MCF 10A (cell line): ENCODE measurements at regions of chr1 and their contacts with region 1.

Region 1: GRCh38 chr1:11907275-11908094 is 18.7 kb downstream of the KIAA2013 start:
- DNase-seq: peak; percentile 94
- H3K4me3 Mint-ChIP-seq: peak overlapping the region; percentile 89
- H3K27ac Mint-ChIP-seq: peak overlapping the region; percentile 100
- H3K4me1 Mint-ChIP-seq: peaks cover 5% of the 10 kb centered on the region
- H3K27me3 Mint-ChIP-seq: no peaks in the 10 kb centered on the region
- CTCF ChIP-seq: peak; percentile 65

Region 2: GRCh38 chr1:11735854-11736745 is 171.4 kb before region 1 on chr1 and contains the start of gene AGTRAP:
- CTCF ChIA-PET with region 1: no interaction called
- POLR2A ChIA-PET with region 1: interaction called, 25 read pairs
- intact Hi-C with region 1: no loop called
- DNase-seq: peak; percentile 89
- H3K4me3 Mint-ChIP-seq: peak within 1 kb of the TSS; percentile 97
- H3K27ac Mint-ChIP-seq: peak within 1 kb of the TSS; percentile 98
- H3K4me1 Mint-ChIP-seq: peaks cover 7% of the 10 kb centered on the region
- H3K27me3 Mint-ChIP-seq: no peaks in the 10 kb centered on the region
- CTCF ChIP-seq: no peak
- total RNA-seq, gene AGTRAP: 68.4 and 73.1 TPM in 2 replicates

Region 3: DNA sequence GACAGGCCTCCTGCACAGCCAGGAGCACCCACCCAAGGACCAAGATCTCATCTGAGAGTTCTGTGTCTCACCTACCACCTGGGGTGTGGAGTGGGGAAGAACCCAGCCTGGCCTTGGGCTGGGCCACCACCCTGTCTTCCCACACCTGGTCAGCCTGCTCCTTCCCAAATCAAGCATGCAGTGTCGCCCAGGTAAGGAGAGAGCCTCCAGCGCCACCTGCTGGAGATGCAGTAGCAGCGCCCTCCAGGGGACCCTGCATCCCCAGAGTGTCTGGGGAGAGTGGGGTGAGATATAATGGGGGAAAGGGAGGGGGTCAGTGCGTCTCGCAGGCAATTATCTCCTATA is 13.6 kb before region 1 on chr1:
- CTCF ChIA-PET with region 1: interaction called, 4 read pairs
- POLR2A ChIA-PET with region 1: interaction called, 15 read pairs
- intact Hi-C with region 1: no loop called
- DNase-seq: peak; percentile 63
- H3K4me3 Mint-ChIP-seq: no peak overlapping the region
- H3K27ac Mint-ChIP-seq: no peak overlapping the region
- H3K4me1 Mint-ChIP-seq: no peaks in the 10 kb centered on the region
- H3K27me3 Mint-ChIP-seq: peaks cover 3% of the 10 kb centered on the region
- CTCF ChIP-seq: peak; percentile 87

Region 4: DNA sequence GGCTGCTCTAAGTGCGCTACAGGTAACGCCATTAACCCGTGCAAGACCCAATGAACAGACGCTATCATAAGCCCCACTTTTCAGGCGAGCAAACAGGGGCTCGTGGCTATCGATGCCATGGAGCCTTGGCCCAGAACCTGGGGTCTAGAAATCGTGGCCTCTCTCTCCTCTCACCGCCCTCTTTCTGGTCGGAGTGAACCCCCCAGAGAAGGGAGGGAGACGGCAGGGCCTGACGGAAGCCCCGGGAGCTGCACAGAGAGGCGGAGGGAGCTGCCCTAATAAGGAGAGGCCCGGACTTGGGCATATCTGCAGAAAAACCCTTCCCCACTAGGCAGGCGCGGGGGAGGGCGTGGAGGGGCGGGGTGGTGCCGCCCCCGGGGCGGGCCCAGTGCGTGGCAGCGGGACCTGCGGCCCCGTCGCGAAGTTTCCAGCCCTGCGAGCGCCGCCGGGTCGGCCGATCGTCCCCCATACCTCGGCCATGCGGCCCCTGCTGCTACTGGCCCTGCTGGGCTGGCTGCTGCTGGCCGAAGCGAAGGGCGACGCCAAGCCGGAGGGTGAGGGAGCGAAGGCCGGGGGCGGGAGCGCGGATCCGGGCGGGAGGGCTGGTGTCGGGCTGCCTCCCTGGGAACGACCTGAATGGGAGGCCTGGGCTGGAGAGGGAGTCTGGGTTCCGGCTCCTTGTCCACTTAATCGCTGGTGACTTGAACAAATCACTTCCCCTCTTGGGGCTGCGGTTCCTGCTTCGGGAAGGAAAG is 27.0 kb after region 1 on chr1 and contains the start of gene PLOD1:
- CTCF ChIA-PET with region 1: no interaction called
- POLR2A ChIA-PET with region 1: interaction called, 83 read pairs
- intact Hi-C with region 1: no loop called
- DNase-seq: peak; percentile 81
- H3K4me3 Mint-ChIP-seq: peak within 1 kb of the TSS; percentile 74
- H3K27ac Mint-ChIP-seq: peak within 1 kb of the TSS; percentile 12
- H3K4me1 Mint-ChIP-seq: peaks cover 21% of the 10 kb centered on the region
- H3K27me3 Mint-ChIP-seq: no peaks in the 10 kb centered on the region
- CTCF ChIP-seq: no peak
- total RNA-seq, gene PLOD1: 47.2 and 48.2 TPM in 2 replicates

Region 5: GRCh38 chr1:12019858-12020509 is 112.5 kb after region 1 on chr1:
- CTCF ChIA-PET with region 1: no interaction called
- POLR2A ChIA-PET with region 1: interaction called, 20 read pairs
- intact Hi-C with region 1: loop called (anchors 1 kb)
- DNase-seq: no peak
- H3K4me3 Mint-ChIP-seq: peak overlapping the region; percentile 85
- H3K27ac Mint-ChIP-seq: peak overlapping the region; percentile 80
- H3K4me1 Mint-ChIP-seq: no peaks in the 10 kb centered on the region
- H3K27me3 Mint-ChIP-seq: no peaks in the 10 kb centered on the region
- CTCF ChIP-seq: no peak